ENCODE measurements at regions of chr15 and their contacts with region 1.

Region 1: GRCh38 chr15:34367101-34368081 is at the start of gene LPCAT4:
- DNase-seq: peak; percentile 95
- CTCF ChIP-seq: peak; percentile 97

Region 2: GRCh38 chr15:33766389-33766788 is 601.0 kb before region 1 on chr15:
- CTCF ChIA-PET with region 1: no interaction called
- POLR2A ChIA-PET with region 1: no interaction called
- DNase-seq: no peak
- CTCF ChIP-seq: no peak

Region 3: DNA sequence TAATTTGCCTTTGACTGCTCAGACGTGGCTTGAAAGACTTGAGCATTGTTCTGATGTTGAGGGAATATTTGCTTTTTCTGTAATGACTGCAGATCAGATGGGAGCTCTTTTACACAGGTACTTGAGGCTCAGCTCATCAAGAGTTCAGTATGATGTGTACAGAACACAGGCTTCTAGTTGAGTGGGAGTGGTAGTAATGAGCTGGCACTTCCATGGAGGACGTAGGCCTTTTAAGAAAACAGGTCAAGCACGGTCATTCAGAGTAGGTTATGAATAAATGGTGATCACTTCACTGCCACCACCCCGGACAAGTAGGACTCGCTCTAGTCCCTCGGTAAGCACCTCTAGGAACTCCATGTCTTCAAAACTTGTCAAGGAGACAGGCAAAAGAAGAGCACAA is 133.8 kb before region 1 on chr15:
- CTCF ChIA-PET with region 1: interaction called, 13 read pairs
- POLR2A ChIA-PET with region 1: no interaction called
- DNase-seq: no peak
- CTCF ChIP-seq: no peak

Region 4: DNA sequence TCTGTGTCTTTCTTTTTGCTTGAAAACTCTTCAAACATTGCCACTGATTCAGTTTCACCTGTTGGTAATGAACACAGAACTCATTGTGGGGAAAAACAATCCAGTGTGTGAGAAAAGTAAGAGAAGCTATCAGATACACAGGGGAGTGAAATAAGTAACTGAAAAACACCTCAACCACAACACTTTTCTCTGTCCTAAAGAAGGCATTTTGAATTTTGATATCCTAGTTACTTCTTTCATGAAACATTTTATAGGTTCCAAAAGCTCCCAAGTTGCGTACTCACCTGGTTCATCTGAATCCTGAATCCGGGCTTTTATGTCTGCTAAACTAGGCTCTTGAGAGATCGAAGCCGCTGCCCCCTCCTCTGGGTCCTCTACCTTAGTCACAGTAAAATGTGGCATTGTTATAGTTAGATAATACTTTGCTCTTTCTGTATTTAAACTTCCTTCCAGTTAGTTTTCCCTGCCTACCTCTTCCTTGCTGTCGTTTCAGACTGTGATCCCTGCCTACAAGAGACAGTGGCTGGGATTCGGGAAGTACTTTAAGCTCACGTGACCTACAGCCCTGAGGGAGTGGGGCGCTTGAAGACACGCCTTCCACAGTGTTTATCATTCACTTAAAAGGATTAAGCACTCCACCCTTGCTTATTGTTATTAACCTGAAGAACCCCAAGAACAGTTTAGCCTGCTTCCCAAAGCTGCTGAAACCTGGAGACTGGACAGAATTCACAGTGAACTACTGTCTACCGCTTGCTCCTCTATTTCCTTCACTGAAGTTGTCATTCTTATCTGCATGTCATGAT is 48.9 kb before region 1 on chr15:
- CTCF ChIA-PET with region 1: interaction called, 11 read pairs
- POLR2A ChIA-PET with region 1: interaction called, 3 read pairs
- DNase-seq: peak; percentile 39
- CTCF ChIP-seq: no peak

Region 5: DNA sequence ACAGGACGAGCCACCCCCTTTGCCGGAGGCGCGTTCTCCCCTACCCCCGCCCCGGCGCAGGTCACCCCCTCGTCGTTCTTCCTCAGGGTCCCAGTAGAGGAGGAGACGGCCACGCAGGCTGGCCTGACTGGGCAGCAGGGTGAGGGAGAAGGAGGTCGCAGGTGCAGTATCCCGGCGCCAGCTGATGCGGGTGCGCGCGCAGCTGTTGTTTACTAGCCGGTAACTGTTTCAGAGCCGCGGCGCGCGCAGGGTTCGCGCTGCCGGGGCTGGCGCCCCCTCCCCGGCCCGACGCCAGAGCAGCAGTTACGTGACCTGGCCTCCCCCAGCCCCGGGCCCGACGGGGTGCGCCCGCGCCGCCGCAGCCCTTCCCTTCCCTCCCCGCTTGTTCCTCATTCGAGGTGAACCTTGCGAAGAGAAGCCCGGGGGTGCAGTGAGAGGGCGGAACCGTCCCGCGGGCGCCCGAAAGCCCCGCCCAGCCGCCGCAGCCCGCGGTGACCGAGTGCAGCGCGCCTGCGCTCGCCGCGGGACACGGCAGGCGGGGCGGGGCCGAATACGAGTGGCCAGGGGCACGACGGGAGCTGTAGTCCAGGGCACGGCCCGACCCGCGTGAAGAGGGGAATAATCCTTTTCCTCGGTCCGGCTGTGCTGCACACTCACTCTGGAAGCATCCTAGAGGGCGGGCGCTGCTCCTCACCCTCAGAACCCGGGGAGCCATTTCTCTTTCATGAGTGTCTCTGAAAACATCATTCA is 29.7 kb before region 1 on chr15 and contains the start of gene SLC12A6:
- CTCF ChIA-PET with region 1: interaction called, 33 read pairs
- POLR2A ChIA-PET with region 1: interaction called, 4 read pairs
- DNase-seq: peak; percentile 93
- CTCF ChIP-seq: no peak

Region 6: GRCh38 chr15:34514251-34514670 is 146.9 kb after region 1 on chr15:
- CTCF ChIA-PET with region 1: no interaction called
- POLR2A ChIA-PET with region 1: no interaction called
- DNase-seq: peak; percentile 66
- CTCF ChIP-seq: no peak

Measured in GM10248 (cell line).